AG04449 (cell line): ENCODE measurements at regions of chr14 and their contacts with region 1.

Region 1: DNA sequence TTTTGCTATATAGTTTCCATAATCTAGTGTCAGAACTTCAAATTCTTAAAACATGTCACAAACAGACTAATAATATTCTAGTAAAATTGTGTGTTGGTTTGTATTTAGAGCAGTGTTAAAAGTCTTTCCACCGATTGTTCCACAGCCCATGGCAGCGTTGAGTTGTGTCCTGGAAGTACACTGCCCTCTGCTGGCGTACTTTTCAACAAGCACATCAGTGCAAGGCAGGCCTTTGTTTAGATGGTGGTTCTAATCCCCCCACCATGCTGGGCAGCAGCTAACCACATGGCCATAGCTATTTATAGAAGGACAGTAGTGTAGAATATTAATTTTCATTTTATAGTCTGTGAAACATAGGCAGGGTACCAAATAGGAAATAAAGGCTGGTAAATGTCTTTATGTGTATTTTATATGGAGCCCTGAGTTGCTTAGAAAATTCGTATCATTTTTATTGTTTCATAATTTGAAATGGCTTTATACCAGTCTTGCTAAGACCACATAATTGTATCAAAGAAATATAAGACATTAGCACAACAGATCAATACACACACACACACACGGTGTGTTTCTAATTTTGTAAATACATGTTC is 235.4 kb downstream of the SEC23A start:
- DNase-seq: peak; percentile 47
- H3K4me3 ChIP-seq: no peak overlapping the region
- CTCF ChIP-seq: peak; percentile 81

Region 2: DNA sequence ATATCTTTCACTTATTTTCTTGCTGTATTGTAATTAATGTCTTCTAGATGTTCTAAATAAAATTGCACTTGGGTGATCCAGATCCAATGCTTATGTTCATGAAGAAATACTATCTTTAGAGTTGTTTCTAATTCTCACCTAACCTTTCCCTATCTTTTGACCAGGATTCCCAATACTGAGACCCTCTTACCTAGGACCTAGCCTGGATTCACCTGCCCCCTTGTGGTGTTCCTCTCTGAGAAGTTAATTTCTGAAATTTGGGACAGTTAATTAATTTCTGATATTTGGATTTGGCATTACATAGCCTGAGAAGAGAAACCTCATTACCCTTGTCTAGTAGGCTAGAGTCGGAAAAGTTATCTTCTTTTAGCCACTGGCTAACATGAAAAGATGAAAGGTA is 1302.1 kb before region 1 on chr14:
- CTCF ChIA-PET with region 1: no interaction called
- POLR2A ChIA-PET with region 1: no interaction called
- DNase-seq: no peak
- H3K4me3 ChIP-seq: no peak overlapping the region
- CTCF ChIP-seq: peak; percentile 7

Region 3: DNA sequence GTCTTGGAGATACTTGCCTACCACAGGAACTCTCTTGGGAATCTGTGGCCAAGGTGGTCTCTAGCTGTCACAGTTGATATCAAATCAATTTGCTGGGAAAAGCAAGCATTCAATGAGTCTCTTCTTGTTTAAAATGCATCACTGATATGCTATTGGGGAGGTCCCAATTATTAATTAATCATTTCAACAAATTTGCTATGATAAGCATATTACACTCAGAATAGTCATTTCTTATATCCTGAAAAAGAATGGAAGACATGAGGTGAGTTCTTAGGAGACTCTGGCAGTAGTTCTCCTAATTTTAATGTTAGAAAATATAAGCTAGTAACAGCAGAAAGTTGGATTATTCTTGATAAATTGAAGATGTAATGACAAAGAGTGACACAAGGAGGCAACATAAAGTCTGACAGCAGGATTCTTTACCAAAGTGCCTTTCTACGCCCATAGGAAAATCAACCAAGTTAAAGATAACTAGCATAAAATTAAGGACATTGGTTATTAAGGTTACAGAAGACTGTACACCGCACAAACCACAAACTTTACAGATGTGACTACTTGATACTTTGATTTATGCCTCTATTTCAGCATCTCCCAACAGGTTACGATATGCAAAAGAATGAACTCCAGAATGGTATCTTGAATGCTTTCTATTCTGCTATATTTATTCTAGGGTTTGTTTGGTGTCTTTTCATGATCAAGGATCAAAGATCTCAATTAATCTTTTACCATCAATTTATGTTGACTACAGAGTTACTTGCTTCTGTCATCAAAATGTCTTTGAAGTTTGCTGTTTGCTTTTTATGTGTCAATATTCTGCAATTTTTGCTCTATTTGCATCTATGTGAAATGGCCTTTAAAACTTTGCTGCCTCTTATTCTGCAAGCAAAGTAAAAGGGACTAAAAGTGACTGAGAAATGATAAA is 262.2 kb before region 1 on chr14:
- CTCF ChIA-PET with region 1: interaction called, 14 read pairs
- POLR2A ChIA-PET with region 1: no interaction called
- DNase-seq: no peak
- H3K4me3 ChIP-seq: no peak overlapping the region
- CTCF ChIP-seq: peak; percentile 3

Region 4: GRCh38 chr14:38721822-38722431 is 145.7 kb before region 1 on chr14:
- CTCF ChIA-PET with region 1: interaction called, 69 read pairs
- POLR2A ChIA-PET with region 1: no interaction called
- DNase-seq: no peak
- H3K4me3 ChIP-seq: no peak overlapping the region
- CTCF ChIP-seq: peak; percentile 72

Region 5: DNA sequence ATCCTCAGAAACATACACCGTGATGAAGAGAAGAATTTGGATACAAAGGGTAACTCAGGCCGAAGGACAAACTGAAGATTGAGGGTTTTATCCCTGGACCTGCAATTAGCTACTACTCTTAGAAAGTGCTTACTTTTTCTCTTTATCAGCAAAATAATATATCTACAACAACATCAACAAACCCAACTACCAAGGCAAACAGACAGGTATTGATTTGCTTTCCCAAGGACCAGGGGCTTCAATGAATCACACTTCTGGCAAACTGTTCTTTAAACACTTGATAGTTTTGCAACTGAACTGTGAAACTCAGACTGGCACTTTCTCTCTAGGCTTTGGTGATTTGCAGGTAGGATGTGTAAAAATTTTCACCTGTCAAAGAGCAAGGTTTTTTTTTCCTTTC is 12.1 kb before region 1 on chr14:
- CTCF ChIA-PET with region 1: interaction called, 13 read pairs
- POLR2A ChIA-PET with region 1: no interaction called
- DNase-seq: no peak
- H3K4me3 ChIP-seq: no peak overlapping the region
- CTCF ChIP-seq: no peak

Region 6: DNA sequence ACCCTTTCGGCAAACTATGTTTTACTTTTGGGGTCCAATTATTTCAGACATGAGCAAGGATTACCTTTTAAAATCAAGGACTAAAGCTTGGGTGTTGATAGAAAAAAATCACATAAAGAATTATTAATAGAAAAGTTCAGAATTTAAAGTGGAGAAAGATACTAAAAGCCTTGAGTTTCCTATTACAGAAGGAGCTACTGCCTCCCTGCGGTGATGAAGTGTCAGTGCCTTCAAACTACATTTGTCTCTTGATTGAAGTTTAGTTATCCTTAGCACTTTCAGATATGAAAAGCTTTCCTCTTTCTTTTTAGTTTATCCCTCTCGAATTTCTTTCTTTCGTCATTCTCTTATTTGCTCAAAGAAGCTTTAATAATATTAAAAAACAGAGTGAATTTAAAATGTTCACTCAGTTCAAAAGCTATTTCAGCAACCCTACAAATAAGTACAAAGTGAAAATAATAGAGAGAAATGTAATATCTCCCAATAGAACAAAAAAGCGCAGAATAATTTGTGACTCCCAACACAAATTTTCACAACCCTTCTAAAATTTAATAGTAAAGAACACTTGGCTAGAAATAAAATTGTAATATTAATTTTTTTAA is 147.8 kb after region 1 on chr14:
- CTCF ChIA-PET with region 1: interaction called, 63 read pairs
- POLR2A ChIA-PET with region 1: no interaction called
- DNase-seq: no peak
- H3K4me3 ChIP-seq: no peak overlapping the region
- CTCF ChIP-seq: peak; percentile 72